GM12878 (cell line): ENCODE measurements at regions of chr6 and their contacts with region 1.

Region 1: GRCh38 chr6:148464319-148465010 is 121.8 kb downstream of the SASH1 start:
- DNase-seq: peak; percentile 12
- ATAC-seq: peak; percentile 92
- H3K4me3 ChIP-seq: no peak overlapping the region
- H3K27ac ChIP-seq: no peak overlapping the region
- H3K4me1 ChIP-seq: no peaks in the 10 kb centered on the region
- H3K27me3 ChIP-seq: no peaks in the 10 kb centered on the region
- CTCF ChIP-seq: peak; percentile 84 to 92 (median 87)
- EP300 ChIP-seq: no peak
- POLR2A ChIP-seq: no peak
- RAD21 ChIP-seq: peak; percentile 77

Region 2: GRCh38 chr6:147390909-147391536 is 1073.4 kb before region 1 on chr6:
- CTCF ChIA-PET with region 1: no interaction called
- POLR2A ChIA-PET with region 1: no interaction called
- RAD21 ChIA-PET with region 1: no interaction called
- SMC1A ChIA-PET with region 1: no interaction called
- in situ Hi-C with region 1: no loop called
- intact Hi-C with region 1: loop called (anchors 10 kb)
- DNase-seq: no peak
- ATAC-seq: no peak
- H3K4me3 ChIP-seq: no peak overlapping the region
- H3K27ac ChIP-seq: no peak overlapping the region
- H3K4me1 ChIP-seq: no peaks in the 10 kb centered on the region
- H3K27me3 ChIP-seq: no peaks in the 10 kb centered on the region
- CTCF ChIP-seq: peak in 2 of 3 experiments; percentile 17 to 58; a peak in 3 of 6 replicates
- EP300 ChIP-seq: no peak
- POLR2A ChIP-seq: no peak
- RAD21 ChIP-seq: peak; percentile 61

Region 3: GRCh38 chr6:147506704-147507114 is 957.8 kb before region 1 on chr6:
- CTCF ChIA-PET with region 1: interaction called, 3 read pairs
- POLR2A ChIA-PET with region 1: no interaction called
- RAD21 ChIA-PET with region 1: no interaction called
- SMC1A ChIA-PET with region 1: no interaction called
- in situ Hi-C with region 1: no loop called
- intact Hi-C with region 1: loop called (anchors 10 kb)
- DNase-seq: no peak
- ATAC-seq: peak; percentile 83
- H3K4me3 ChIP-seq: no peak overlapping the region
- H3K27ac ChIP-seq: no peak overlapping the region
- H3K4me1 ChIP-seq: no peaks in the 10 kb centered on the region
- H3K27me3 ChIP-seq: peaks cover 8 to 16% of the 10 kb centered on the region in 2 experiments
- CTCF ChIP-seq: peak; percentile 45 to 51 (median 46); a peak in 5 of 6 replicates
- EP300 ChIP-seq: no peak
- POLR2A ChIP-seq: no peak
- RAD21 ChIP-seq: peak; percentile 65

Region 4: DNA sequence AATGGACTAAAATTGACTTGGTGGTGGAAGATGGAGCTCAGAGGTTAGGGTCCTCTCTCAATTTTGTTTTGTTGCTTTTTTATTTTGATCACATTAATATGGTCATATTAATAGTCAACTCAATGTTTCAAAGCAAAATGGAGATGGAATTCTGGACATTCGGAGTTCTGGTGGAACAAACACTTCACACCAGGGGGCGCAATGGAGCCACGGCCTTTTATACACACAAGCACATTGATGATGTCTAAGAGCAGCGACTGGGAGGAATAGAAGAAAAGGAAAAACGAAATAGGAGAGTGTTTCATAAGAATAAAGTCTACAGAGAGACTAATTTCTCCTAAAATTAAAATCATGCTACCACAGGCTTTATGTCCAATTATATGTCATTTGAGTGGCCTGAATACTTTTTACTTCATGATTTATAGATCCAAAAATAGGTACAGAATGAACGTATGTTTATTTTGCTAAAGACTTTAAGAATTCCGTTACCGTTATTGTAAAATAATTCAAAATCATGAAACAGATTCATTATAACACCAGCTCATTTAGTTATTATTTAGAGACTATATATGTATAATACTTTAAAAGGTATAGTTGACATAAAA is 319.4 kb before region 1 on chr6:
- CTCF ChIA-PET with region 1: interaction called, 12 read pairs
- POLR2A ChIA-PET with region 1: no interaction called
- RAD21 ChIA-PET with region 1: interaction called, 3 read pairs
- SMC1A ChIA-PET with region 1: interaction called, 7 read pairs
- in situ Hi-C with region 1: no loop called
- intact Hi-C with region 1: loop called (anchors 1 kb)
- DNase-seq: no peak
- ATAC-seq: peak; percentile 91
- H3K4me3 ChIP-seq: no peak overlapping the region
- H3K27ac ChIP-seq: no peak overlapping the region
- H3K4me1 ChIP-seq: no peaks in the 10 kb centered on the region
- H3K27me3 ChIP-seq: no peaks in the 10 kb centered on the region
- CTCF ChIP-seq: peak; percentile 71 to 87 (median 74)
- EP300 ChIP-seq: no peak
- POLR2A ChIP-seq: no peak
- RAD21 ChIP-seq: peak; percentile 55

Region 5: DNA sequence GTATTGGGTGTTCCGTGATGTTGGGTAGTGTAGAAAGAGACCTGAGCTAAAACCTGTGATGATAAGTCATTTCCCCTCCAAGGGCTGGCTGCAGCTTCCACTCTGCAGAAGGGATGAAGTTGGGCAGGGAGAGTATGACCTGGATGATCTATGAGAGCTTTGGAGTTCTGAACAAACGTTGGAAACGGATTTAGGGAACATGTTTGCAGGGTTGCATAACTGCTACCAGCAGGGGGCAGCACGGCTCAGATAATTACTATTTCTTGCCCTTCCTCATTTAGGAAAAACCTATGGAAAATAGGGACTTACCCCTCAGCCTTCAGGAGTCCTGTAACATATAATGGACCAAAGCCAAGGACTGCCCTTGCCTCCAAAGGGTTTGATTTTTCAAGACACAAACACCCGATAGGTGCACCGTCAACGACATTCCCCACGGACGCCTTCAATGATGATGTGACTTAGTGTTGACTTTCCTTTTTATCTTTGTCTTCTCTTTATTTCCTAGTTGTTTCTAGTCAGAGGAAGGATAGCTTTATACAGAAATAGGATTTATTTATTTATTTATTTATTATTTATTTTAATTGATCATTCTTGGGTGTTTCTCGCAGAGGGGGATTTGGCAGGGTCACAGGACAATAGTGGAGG is 286.8 kb before region 1 on chr6:
- CTCF ChIA-PET with region 1: interaction called, 91 read pairs
- POLR2A ChIA-PET with region 1: no interaction called
- RAD21 ChIA-PET with region 1: interaction called, 4 read pairs
- SMC1A ChIA-PET with region 1: interaction called, 14 read pairs
- in situ Hi-C with region 1: no loop called
- intact Hi-C with region 1: loop called (anchors 1 kb)
- DNase-seq: no peak
- ATAC-seq: no peak
- H3K4me3 ChIP-seq: no peak overlapping the region
- H3K27ac ChIP-seq: no peak overlapping the region
- H3K4me1 ChIP-seq: no peaks in the 10 kb centered on the region
- H3K27me3 ChIP-seq: no peaks in the 10 kb centered on the region
- CTCF ChIP-seq: peak; percentile 58 to 71 (median 62); a peak in 5 of 6 replicates
- EP300 ChIP-seq: no peak
- POLR2A ChIP-seq: no peak
- RAD21 ChIP-seq: peak; percentile 57

Region 6: GRCh38 chr6:148186916-148187315 is 277.5 kb before region 1 on chr6:
- CTCF ChIA-PET with region 1: no interaction called
- POLR2A ChIA-PET with region 1: no interaction called
- RAD21 ChIA-PET with region 1: no interaction called
- SMC1A ChIA-PET with region 1: no interaction called
- in situ Hi-C with region 1: loop called (anchors 5 kb)
- intact Hi-C with region 1: no loop called
- DNase-seq: no peak
- ATAC-seq: no peak
- H3K4me3 ChIP-seq: no peak overlapping the region
- H3K27ac ChIP-seq: no peak overlapping the region
- H3K4me1 ChIP-seq: no peaks in the 10 kb centered on the region
- H3K27me3 ChIP-seq: no peaks in the 10 kb centered on the region
- CTCF ChIP-seq: no peak
- EP300 ChIP-seq: no peak
- POLR2A ChIP-seq: no peak
- RAD21 ChIP-seq: no peak